ENCODE measurements at regions of chr1 and their contacts with region 1.

Region 1: DNA sequence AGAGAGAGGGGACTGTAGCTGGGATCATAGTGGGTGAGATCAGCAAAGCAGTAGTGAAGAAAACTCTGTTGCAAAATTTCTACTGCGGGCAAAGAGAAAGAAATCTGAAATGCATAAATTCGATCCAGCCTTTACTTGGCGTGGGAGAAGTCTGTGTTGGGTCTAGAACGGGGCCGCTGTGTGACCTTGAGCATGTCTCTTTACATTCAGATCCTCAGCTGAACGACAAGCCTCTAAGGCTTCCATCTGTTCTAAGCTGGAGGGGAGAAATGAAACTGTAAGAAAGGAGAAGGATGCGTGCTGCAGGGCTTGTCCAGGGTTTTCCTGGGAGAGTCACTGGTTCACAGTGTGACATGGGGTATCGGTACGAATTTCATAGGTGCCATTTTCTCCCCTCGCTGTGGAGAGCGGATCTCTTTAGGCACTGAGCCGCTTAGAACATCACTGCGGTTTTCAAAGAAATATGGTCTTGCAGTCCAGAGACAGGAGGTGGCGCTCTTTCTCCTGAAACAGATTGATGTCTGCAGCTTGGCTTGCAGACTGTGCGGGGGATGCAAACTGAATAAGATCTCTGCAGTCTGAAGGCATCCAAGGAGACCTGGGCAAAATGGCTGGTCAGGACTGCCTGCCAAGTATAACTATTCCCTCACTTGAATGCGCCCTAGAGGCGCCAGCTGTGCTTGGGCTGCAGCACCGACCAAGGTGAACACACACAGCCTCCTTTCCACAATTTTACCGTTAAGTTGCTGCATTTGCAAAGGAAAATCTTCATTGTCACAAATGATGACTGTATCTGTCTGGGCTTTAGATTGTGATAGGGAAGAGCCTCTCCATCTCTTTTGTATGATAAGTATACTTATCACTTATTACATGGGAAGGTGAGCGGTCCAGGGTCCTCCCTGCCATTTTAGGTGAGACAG is 104.1 kb downstream of the XCL2 start:
- DNase-seq: peak; percentile 63
- H3K4me3 ChIP-seq: no peak overlapping the region
- H3K27ac ChIP-seq: no peak overlapping the region
- H3K4me1 ChIP-seq: no peaks in the 10 kb centered on the region
- H3K27me3 ChIP-seq: no peaks in the 10 kb centered on the region
- CTCF ChIP-seq: peak; percentile 69 to 74
- POLR2A ChIP-seq: no peak

Region 2: DNA sequence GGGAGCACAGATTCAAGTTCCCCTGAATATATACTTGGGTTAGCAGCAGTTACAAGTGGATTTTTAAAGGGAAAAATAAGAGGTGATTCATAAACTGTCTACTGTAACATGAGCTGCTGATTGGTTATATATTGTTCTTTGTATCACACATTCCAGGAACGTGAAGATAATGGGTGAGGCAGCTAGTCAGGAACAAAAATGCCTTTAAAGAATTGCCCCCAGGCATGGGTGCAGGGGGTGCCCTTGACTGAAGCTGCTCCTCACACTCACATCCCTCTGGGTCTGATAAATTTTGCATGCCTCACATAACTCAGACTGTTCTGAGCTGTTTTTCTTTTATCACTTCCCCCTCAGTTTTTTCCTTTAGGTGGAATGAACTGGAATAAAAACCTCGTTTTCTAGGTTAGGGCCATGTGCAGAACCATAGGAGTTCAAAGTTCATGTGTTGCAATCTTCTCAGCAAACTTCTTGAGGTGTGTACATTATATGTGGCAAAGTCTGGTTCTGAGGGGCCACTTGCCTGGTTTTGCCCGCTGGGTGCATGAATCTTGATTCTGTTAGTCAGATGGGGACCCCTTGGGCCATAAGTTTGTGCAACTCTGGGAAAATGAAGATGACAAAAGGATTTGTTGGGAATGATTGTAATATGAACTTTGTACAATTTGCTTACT is 137.9 kb before region 1 on chr1:
- CTCF ChIA-PET with region 1: no interaction called
- POLR2A ChIA-PET with region 1: no interaction called
- dilution Hi-C with region 1: no loop called
- intact Hi-C with region 1: no loop called
- DNase-seq: no peak
- H3K4me3 ChIP-seq: no peak overlapping the region
- H3K27ac ChIP-seq: no peak overlapping the region
- H3K4me1 ChIP-seq: no peaks in the 10 kb centered on the region
- H3K27me3 ChIP-seq: no peaks in the 10 kb centered on the region
- CTCF ChIP-seq: no peak
- POLR2A ChIP-seq: no peak

Region 3: GRCh38 chr1:168572633-168573032 is 132.9 kb after region 1 on chr1:
- CTCF ChIA-PET with region 1: interaction called, 3 read pairs
- POLR2A ChIA-PET with region 1: no interaction called
- dilution Hi-C with region 1: no loop called
- intact Hi-C with region 1: loop called (anchors 1 kb)
- DNase-seq: no peak
- H3K4me3 ChIP-seq: no peak overlapping the region
- H3K27ac ChIP-seq: no peak overlapping the region
- H3K4me1 ChIP-seq: no peaks in the 10 kb centered on the region
- H3K27me3 ChIP-seq: no peaks in the 10 kb centered on the region
- CTCF ChIP-seq: no peak
- POLR2A ChIP-seq: no peak

Measured in endothelial cell of umbilical vein (primary cell).